ENCODE measurements at regions of chr1 and their contacts with region 1.

Region 1: DNA sequence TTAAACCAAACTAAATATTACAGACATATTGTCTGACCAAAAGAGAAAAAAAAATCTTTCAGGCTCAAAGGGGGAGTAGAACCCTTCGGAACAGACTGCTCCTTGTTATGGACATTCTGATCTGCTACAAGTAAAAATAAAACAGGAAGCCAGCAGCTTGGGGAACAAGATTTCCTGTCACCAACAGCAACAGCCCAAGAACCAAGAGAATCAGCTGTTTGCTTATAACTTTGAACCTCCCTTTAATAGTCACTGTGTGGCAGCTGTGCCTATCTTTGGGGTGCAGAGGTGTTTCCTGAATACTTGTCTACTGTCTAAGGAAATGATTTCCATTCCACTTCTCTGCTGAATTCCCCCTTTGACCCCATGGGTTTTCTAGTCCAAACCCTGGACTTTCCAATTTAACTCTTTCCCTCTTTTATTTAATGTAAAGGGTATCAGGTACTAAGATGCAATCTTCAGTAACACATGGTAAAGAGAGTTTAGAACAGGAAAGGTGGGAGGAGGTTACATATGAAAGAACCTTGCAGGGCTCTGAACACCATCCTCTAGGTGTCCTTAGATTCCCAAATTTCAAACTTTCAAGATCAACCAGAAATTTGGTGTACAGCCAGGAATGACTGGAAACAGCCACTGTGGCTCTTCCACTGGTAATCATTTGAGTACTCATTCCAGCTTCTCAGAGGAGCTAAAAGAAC is 38.6 kb downstream of the GPR3 start:
- DNase-seq: peak in 1 of 2 donors; percentile 31
- ATAC-seq: peak in 1 of 2 donors; percentile 56
- H3K4me3 ChIP-seq: peak overlapping the region in 1 of 4 donors; percentile 2
- H3K27ac ChIP-seq: peak overlapping the region; percentile 75 to 83 (median 78)
- H3K4me1 ChIP-seq: peaks cover 84 to 89% of the 10 kb centered on the region in 2 donors
- H3K27me3 ChIP-seq: no peaks in the 10 kb centered on the region
- CTCF ChIP-seq: no peak
- POLR2A ChIP-seq: no peak

Region 2: DNA sequence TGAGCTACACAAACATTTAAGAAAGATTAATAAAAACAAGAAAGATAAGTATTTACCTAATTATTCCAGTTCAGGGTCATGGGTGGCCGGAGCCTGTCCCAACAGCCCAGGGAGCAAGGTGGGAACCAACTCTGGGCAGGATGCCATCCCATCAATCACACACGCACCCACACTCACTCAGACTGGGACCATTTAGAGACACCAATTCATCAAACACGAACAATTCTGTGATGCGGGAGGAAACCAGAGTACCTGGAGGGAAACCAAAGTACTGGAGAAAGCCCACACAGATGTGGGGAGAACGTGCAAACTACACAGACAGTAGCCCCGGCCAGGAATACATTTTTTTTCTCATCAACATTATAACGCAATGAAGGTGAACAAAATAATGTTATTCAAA is 42.7 kb after region 1 on chr1:
- in situ Hi-C with region 1: loop called in 1 of 4 experiments (anchors 10 kb)
- intact Hi-C with region 1: no loop called
- DNase-seq: no peak
- ATAC-seq: no peak
- H3K4me3 ChIP-seq: no peak overlapping the region
- H3K27ac ChIP-seq: peak overlapping the region; percentile 2 to 54 (median 13)
- H3K4me1 ChIP-seq: peaks cover 34 to 57% of the 10 kb centered on the region in 2 donors
- H3K27me3 ChIP-seq: no peaks in the 10 kb centered on the region
- CTCF ChIP-seq: no peak
- POLR2A ChIP-seq: no peak

Region 3: DNA sequence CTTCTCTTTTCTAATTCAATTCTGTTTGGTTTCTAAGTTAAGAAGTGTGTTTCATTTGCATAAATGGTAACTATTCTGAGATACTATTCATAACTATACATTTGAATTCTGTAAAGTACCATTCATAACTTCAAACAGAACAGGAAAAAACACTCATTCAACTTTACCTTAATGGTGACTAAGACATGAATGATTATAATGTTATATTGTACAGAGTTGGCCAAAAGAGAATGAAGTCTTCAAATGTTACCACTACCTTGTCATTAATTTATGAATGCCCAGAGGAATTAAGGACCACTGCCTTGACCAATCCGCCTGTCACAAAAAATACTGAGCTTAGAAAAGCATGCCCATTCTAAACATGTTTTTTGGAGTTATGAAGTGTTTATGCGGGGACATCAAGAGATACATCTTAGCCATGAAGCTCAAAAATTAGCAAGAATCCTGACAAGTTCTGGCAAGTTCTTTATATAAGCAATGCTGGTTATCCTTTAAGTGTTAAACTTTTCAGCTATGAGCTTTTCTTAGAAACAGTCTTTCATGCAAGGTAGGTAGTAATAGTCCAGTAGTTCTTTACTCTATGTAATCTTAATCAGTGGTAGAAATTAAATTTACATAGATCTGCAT is 51.1 kb after region 1 on chr1:
- in situ Hi-C with region 1: loop called in 1 of 4 experiments (anchors 10 kb)
- intact Hi-C with region 1: loop called (anchors 5 kb)
- DNase-seq: no peak
- ATAC-seq: no peak
- H3K4me3 ChIP-seq: no peak overlapping the region
- H3K27ac ChIP-seq: no peak overlapping the region
- H3K4me1 ChIP-seq: peaks cover 39 to 42% of the 10 kb centered on the region in 2 donors
- H3K27me3 ChIP-seq: no peaks in the 10 kb centered on the region
- CTCF ChIP-seq: no peak
- POLR2A ChIP-seq: no peak

Measured in gastrocnemius medialis (tissue), 4 donors.